A549 (cell line): ENCODE measurements at regions of chr1 and their contacts with region 1.

Region 1: DNA sequence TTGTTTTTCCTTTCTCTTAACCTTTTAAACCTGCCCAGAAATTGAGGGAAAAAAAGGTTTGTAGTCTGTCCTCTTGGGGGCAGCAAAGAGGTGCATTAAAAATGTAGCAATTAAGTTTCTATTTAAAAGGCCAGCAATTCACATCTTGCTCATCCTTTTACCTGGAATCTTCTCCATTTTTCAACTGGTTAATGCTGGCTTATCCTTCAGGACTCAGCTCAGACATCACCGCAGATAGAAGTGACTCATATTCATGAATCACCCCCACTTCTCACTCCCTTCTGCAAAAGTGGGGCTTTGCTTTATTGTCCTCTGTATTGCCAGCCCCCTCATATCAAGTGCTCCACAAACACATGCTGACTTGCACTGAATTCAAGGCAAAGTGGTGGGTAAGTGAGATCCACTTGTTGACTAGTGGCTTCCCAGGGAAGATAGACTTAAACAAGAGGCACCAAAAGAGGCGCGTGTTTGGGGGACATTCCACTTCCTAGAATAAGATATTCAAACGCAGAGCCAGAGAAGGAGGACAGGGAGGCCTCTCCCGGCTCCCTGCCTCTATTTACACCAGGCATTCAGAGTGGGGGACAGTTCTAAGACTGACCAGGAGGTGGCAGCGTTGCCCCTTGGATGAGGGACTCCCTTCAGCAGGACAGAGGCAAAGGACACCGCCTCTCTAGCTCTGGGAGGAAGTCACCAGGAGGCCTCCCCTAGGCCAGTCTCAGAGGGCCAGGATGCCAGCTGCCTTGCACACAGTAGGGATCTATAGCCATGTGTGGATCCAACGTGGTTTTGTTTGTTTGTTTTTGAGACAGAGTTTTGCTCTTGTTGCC is 23.2 kb upstream of the ZNF648 start:
- DNase-seq: peak; percentile 68 to 74
- ATAC-seq: peak; percentile 84 to 95
- H3K4me3 ChIP-seq: no peak overlapping the region
- H3K27ac ChIP-seq: no peak overlapping the region
- H3K4me1 ChIP-seq: 0 out of 3 replicates have a peak, but pooled peaks cover 3% of the 10 kb centered on the region
- CTCF ChIP-seq: peak; percentile 72
- EP300 ChIP-seq: no peak
- POLR2A ChIP-seq: no peak
- RAD21 ChIP-seq: peak; percentile 90 to 94

Region 2: DNA sequence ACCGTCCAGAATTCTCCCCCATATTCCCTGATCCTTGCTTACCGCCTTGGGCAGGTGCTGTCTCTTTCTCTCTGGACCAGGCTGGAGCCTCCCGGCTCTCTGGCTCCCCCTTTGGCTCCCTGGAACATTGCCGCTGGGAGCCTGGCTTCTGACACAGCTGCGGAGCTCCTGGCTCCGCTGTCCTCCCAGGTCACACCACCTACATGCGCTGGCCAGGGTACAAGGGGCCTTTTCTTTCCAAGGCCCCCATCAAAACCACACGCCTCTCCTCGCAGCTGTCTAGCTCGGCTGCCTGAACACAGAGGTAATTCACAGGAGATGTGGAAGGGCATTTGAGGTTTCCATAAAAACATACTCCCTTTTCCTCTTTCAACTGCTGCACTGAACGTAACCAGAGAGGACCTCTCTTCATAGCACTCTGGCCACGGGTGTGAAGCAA is 15.7 kb before region 1 on chr1:
- CTCF ChIA-PET with region 1: interaction called, 76 read pairs
- POLR2A ChIA-PET with region 1: no interaction called
- DNase-seq: peak; percentile 60 to 90
- ATAC-seq: peak; percentile 96 to 100
- H3K4me3 ChIP-seq: no peak overlapping the region
- H3K27ac ChIP-seq: no peak overlapping the region
- H3K4me1 ChIP-seq: no peaks in the 10 kb centered on the region
- CTCF ChIP-seq: peak; percentile 48
- EP300 ChIP-seq: no peak
- POLR2A ChIP-seq: no peak
- RAD21 ChIP-seq: peak in 1 of 2 experiments; percentile 44; a peak in 3 of 5 replicates